ENCODE measurements at regions of chr17 and their contacts with region 1.

Region 1: GRCh38 chr17:65556014-65556909 is 5.2 kb downstream of the AXIN2 start:
- DNase-seq: peak; percentile 79 to 96 (median 88)
- ATAC-seq: peak; percentile 34
- H3K4me3 ChIP-seq: peak overlapping the region in 1 of 2 experiments; percentile 31
- H3K4me3 Mint-ChIP-seq: peak overlapping the region; percentile 58
- H3K27ac ChIP-seq: no peak overlapping the region
- H3K27ac Mint-ChIP-seq: no peak overlapping the region
- H3K4me1 ChIP-seq: peaks cover 44% of the 10 kb centered on the region
- H3K4me1 Mint-ChIP-seq: peaks cover 20% of the 10 kb centered on the region
- H3K27me3 ChIP-seq: no peaks in the 10 kb centered on the region
- H3K27me3 Mint-ChIP-seq: no peaks in the 10 kb centered on the region
- CTCF ChIP-seq: peak; percentile 90

Region 2: GRCh38 chr17:65231662-65232335 is 324.5 kb before region 1 on chr17:
- CTCF ChIA-PET with region 1: no interaction called
- POLR2A ChIA-PET with region 1: no interaction called
- intact Hi-C with region 1: loop called (anchors 1 to 2 kb)
- DNase-seq: peak in 7 of 9 experiments; percentile 15 to 64 (median 28)
- ATAC-seq: no peak
- H3K4me3 ChIP-seq: no peak overlapping the region
- H3K4me3 Mint-ChIP-seq: no peak overlapping the region
- H3K27ac ChIP-seq: no peak overlapping the region
- H3K27ac Mint-ChIP-seq: no peak overlapping the region
- H3K4me1 ChIP-seq: peaks cover 21% of the 10 kb centered on the region
- H3K4me1 Mint-ChIP-seq: peaks cover 20% of the 10 kb centered on the region
- H3K27me3 ChIP-seq: no peaks in the 10 kb centered on the region
- H3K27me3 Mint-ChIP-seq: peaks cover 5% of the 10 kb centered on the region
- CTCF ChIP-seq: no peak

Region 3: GRCh38 chr17:65345261-65346005 is 210.8 kb before region 1 on chr17:
- CTCF ChIA-PET with region 1: no interaction called
- POLR2A ChIA-PET with region 1: no interaction called
- intact Hi-C with region 1: loop called in 1 of 2 experiments (anchors 5 kb)
- DNase-seq: peak in 6 of 9 experiments; percentile 3 to 60 (median 30)
- ATAC-seq: peak; percentile 52
- H3K4me3 ChIP-seq: no peak overlapping the region
- H3K4me3 Mint-ChIP-seq: peak overlapping the region; percentile 42
- H3K27ac ChIP-seq: peak overlapping the region in 1 of 2 experiments; percentile 18
- H3K27ac Mint-ChIP-seq: peak overlapping the region; percentile 86
- H3K4me1 ChIP-seq: peaks cover 11% of the 10 kb centered on the region
- H3K4me1 Mint-ChIP-seq: peaks cover 11% of the 10 kb centered on the region
- H3K27me3 ChIP-seq: no peaks in the 10 kb centered on the region
- H3K27me3 Mint-ChIP-seq: peaks cover 3% of the 10 kb centered on the region
- CTCF ChIP-seq: no peak

Region 4: DNA sequence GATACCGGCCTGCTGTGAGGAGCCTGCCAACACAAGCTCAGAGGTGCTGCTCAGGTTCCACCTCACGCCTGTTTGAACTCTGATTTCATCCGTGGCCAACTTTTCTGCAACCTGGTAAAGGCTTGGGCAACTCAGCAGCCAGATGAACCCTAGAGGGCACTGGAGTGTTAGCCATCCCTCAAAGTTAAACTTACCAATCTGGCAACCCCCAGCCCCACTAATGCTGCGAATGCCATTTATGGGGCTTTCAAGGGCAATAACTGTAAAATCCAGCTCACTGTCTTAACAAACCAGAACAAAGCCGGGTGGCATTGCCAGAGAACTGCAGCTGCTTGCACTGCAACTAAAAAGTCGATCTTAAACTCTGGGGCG is 100.3 kb before region 1 on chr17:
- CTCF ChIA-PET with region 1: interaction called, 11 read pairs
- POLR2A ChIA-PET with region 1: no interaction called
- intact Hi-C with region 1: loop called (anchors 2 kb)
- DNase-seq: peak in 4 of 9 experiments; percentile 10 to 48 (median 22)
- ATAC-seq: peak; percentile 36
- H3K4me3 ChIP-seq: no peak overlapping the region
- H3K4me3 Mint-ChIP-seq: no peak overlapping the region
- H3K27ac ChIP-seq: no peak overlapping the region
- H3K27ac Mint-ChIP-seq: no peak overlapping the region
- H3K4me1 ChIP-seq: no peaks in the 10 kb centered on the region
- H3K4me1 Mint-ChIP-seq: peaks cover 6% of the 10 kb centered on the region
- H3K27me3 ChIP-seq: no peaks in the 10 kb centered on the region
- H3K27me3 Mint-ChIP-seq: no peaks in the 10 kb centered on the region
- CTCF ChIP-seq: no peak

Region 5: DNA sequence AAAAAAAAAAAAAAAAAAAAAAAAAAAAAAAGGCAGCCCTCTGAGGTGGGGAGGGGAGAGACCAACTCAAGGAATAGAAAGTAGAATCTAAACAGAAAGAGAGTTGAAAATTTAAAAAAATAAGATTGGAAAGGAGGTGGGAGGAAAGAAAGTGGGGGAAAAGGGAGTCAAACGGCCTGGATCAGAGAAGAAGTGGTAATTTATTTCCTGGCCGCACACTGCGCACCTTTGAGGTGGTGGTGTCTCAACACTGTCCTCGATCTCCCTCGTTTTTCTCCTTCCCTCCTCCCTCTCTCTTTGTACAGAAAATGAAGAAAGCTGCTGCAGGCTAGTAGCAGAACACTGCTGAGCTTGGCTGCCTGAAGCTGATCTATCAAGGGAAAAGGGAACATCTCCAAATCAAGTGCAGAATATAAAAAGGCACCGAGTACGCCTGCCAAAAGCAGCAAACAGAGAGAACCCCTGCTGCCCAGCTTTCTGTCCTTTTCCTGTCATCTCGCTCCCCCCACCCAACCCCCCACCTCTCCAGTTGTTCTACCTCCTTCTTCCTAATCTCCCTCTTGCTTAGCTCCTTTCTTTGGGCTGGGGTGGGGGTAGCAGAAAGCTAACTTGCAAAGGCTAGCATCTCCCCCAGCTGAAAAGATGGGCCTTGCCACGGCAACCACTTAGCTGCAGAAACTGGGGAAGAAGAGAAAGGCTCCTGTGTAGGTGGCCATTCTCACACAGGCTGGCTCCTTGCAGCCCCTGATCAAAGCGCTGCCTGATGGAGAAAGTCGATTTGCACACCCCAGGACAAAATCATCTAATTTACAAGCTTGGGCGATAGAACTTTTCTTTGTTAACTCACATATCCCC is 17.4 kb before region 1 on chr17:
- CTCF ChIA-PET with region 1: interaction called, 19 read pairs
- POLR2A ChIA-PET with region 1: interaction called, 3 read pairs
- intact Hi-C with region 1: loop called in 1 of 2 experiments (anchors 1 kb)
- DNase-seq: no peak
- ATAC-seq: peak; percentile 26
- H3K4me3 ChIP-seq: no peak overlapping the region
- H3K4me3 Mint-ChIP-seq: peak overlapping the region; percentile 11
- H3K27ac ChIP-seq: no peak overlapping the region
- H3K27ac Mint-ChIP-seq: peak overlapping the region; percentile 62
- H3K4me1 ChIP-seq: peaks cover 22% of the 10 kb centered on the region
- H3K4me1 Mint-ChIP-seq: peaks cover 27% of the 10 kb centered on the region
- H3K27me3 ChIP-seq: no peaks in the 10 kb centered on the region
- H3K27me3 Mint-ChIP-seq: no peaks in the 10 kb centered on the region
- CTCF ChIP-seq: no peak

Region 6: DNA sequence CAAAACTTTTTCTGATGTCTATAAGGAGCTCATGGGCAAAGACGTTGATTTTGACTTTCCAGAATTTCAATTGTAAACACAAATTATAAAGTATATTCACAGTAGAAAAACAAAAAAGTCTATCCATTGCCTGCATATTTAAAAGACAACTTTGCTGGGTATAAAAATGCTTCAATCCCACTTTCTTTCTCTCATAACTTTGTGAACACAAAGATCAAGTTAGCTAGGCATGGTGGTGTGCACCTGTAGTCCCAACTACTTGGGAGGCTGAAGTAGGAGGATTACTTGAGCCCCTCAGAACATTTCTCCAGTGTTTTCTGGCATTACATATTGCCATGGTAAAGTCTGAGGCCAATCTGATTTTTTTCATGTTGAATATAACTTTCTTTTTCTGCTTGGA is 88.3 kb after region 1 on chr17:
- CTCF ChIA-PET with region 1: no interaction called
- POLR2A ChIA-PET with region 1: no interaction called
- intact Hi-C with region 1: no loop called
- DNase-seq: no peak
- ATAC-seq: no peak
- H3K4me3 ChIP-seq: no peak overlapping the region
- H3K4me3 Mint-ChIP-seq: no peak overlapping the region
- H3K27ac ChIP-seq: no peak overlapping the region
- H3K27ac Mint-ChIP-seq: no peak overlapping the region
- H3K4me1 ChIP-seq: no peaks in the 10 kb centered on the region
- H3K4me1 Mint-ChIP-seq: no peaks in the 10 kb centered on the region
- H3K27me3 ChIP-seq: no peaks in the 10 kb centered on the region
- H3K27me3 Mint-ChIP-seq: no peaks in the 10 kb centered on the region
- CTCF ChIP-seq: no peak

Measured in CD8-positive, alpha-beta T cell (primary cell).